HepG2 (cell line): ENCODE measurements at regions of chr15 and their contacts with region 1.

Region 1: GRCh38 chr15:86001200-86001599 is 78.5 kb upstream of the AGBL1 start:
- DNase-seq: no peak
- ATAC-seq: no peak
- H3K4me3 ChIP-seq: no peak overlapping the region
- H3K27ac ChIP-seq: no peak overlapping the region
- H3K4me1 ChIP-seq: no peaks in the 10 kb centered on the region
- H3K27me3 ChIP-seq: no peaks in the 10 kb centered on the region
- CTCF ChIP-seq: no peak
- EP300 ChIP-seq: no peak
- POLR2A ChIP-seq: no peak
- RAD21 ChIP-seq: no peak

Region 2: DNA sequence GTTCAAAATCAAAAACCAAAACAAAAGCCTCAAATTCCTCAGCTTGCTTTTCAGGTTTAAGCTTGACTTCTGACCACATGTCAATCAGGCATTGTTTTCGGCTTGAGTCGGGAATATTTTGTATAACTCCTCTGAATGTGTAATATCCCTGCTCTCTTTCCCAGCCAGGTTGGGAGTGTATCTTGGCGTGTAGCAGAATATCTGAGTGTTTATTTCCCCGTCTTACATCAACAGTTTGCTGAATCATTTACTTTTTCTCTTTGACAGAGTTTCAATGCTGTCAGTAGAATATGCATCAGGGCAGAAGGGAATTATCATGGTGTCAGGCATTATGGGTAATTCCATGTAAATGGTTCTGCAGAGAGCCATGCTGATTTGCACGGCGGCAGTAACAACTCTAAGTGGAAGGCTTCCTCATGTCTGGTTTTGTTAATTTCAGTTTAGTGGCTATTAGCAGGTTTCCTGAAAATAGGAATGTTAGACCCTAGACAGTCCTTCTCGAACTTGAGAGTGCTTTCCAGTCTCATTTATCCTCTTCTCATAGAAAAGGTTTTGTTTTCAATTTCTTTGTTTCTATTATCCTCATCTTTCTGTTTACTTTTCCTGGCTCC is 644.8 kb after region 1 on chr15:
- CTCF ChIA-PET with region 1: no interaction called
- POLR2A ChIA-PET with region 1: no interaction called
- in situ Hi-C with region 1: no loop called
- intact Hi-C with region 1: loop called (anchors 10 kb)
- DNase-seq: no peak
- ATAC-seq: no peak
- H3K4me3 ChIP-seq: no peak overlapping the region
- H3K27ac ChIP-seq: no peak overlapping the region
- H3K4me1 ChIP-seq: no peaks in the 10 kb centered on the region
- H3K27me3 ChIP-seq: no peaks in the 10 kb centered on the region
- CTCF ChIP-seq: no peak
- EP300 ChIP-seq: no peak
- POLR2A ChIP-seq: no peak
- RAD21 ChIP-seq: no peak

Region 3: DNA sequence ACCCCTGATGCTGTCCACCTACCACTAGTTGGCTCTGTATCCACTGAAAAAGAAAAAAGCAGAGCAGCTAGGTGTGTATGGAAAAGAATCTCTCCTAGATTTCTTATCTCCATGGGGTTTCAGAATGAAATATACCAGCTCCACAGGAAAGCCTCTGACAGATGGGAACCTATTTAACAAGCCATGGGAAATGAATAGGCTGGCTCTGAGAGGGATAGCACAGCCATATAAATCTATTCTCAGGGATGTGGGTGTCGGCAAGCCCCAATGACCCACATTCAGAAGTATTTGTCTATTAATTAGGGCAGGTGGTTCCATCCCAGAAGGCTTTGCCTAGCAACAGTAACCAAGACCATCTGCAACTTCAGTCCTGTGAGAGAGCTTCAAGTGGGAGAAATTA is 772.5 kb after region 1 on chr15:
- CTCF ChIA-PET with region 1: no interaction called
- POLR2A ChIA-PET with region 1: no interaction called
- in situ Hi-C with region 1: no loop called
- intact Hi-C with region 1: no loop called
- DNase-seq: no peak
- ATAC-seq: no peak
- H3K4me3 ChIP-seq: no peak overlapping the region
- H3K27ac ChIP-seq: no peak overlapping the region
- H3K4me1 ChIP-seq: no peaks in the 10 kb centered on the region
- H3K27me3 ChIP-seq: no peaks in the 10 kb centered on the region
- CTCF ChIP-seq: no peak
- EP300 ChIP-seq: no peak
- POLR2A ChIP-seq: no peak
- RAD21 ChIP-seq: no peak